BJ (cell line): ENCODE measurements at regions of chr11 and their contacts with region 1.

Region 1: GRCh38 chr11:8682303-8683114 is at the starts of genes RPL27A and TRIM66:
- DNase-seq: peak; percentile 71
- H3K4me3 ChIP-seq: peak within 1 kb of the TSS; percentile 92
- H3K27me3 ChIP-seq: no peaks in the 10 kb centered on the region
- CTCF ChIP-seq: no peak
- polyA plus RNA-seq, gene RPL27A: 988 and 1,148 TPM in 2 replicates
- polyA plus RNA-seq, gene TRIM66: 4.2 and 5.6 TPM in 2 replicates

Region 2: DNA sequence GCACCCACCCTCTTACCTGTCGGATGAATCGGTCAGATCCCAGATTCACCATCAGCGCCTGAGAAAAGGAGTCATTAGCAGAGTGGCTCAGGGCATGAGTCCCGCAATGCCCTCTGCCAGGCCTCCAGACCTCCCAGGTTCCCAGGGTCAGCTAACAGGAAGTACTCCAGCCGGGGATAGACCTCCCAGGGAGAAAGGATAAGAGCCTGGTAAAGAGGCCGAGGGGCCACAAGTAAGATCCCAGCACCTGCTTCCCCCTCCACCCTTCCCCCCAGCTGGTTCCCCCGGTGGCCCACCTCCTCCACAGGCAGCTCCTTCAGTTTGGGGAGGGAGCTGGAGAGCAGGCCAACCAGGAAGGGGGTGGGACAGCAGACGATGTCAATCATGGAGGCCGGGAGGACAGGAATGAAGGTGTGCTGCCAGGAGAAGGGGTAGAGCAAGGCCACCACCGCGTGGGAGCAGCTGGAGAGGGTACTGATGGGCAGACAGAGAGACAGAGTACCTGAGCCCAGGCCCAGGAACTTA is 16.5 kb after region 1 on chr11:
- CTCF ChIA-PET with region 1: no interaction called
- POLR2A ChIA-PET with region 1: interaction called, 15 read pairs
- DNase-seq: no peak
- H3K4me3 ChIP-seq: no peak overlapping the region
- H3K27me3 ChIP-seq: no peaks in the 10 kb centered on the region
- CTCF ChIP-seq: no peak